BJ (cell line): ENCODE measurements at regions of chr2 and their contacts with region 1.

Region 1: DNA sequence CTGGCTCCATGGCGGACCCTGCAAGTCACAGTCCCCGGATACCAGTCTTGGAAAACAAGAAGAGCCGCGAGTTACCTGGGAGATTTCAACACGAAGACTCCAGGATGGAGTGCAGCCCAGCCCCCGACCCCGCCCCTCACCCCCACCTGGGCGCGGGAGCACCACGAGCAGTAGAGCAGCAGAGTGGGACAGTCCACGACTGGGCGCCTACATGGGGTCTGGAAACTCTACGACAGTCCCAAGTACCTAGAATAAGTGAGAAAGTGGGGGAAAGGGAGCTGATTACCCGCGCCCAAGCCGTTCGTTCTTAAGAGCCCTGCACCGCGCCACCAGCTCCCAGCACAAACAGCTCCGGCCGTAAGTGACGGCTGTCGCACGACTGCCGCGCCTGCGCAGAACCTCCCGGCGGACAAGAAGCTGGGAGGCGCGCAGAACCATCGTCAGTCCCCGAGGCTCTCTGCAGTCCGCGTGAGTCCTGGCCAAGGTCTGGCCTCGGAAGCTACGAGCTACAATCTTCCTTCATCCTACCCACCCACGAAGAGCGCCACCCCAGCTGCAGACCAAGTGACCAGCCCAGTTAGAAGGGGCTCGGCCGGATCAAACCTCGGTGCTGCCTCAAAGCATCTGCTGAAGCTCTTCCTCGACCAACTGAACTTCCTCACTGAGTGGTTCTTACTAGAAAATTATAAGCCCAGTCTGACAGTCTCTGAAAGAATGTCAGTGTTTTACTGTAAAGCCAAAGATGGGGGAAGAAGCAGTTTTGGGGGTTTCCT is at the start of gene DPY30:
- DNase-seq: peak; percentile 70
- H3K4me3 ChIP-seq: peak within 1 kb of the TSS; percentile 66
- H3K27me3 ChIP-seq: no peaks in the 10 kb centered on the region
- CTCF ChIP-seq: no peak
- polyA plus RNA-seq, gene DPY30: 35.3 and 66.1 TPM in 2 replicates

Region 2: GRCh38 chr2:31859959-31860358 is 179.7 kb before region 1 on chr2:
- CTCF ChIA-PET with region 1: no interaction called
- POLR2A ChIA-PET with region 1: no interaction called
- DNase-seq: no peak
- H3K4me3 ChIP-seq: no peak overlapping the region
- H3K27me3 ChIP-seq: no peaks in the 10 kb centered on the region
- CTCF ChIP-seq: no peak

Region 3: GRCh38 chr2:31983762-31984460 is 55.7 kb before region 1 on chr2:
- CTCF ChIA-PET with region 1: no interaction called
- POLR2A ChIA-PET with region 1: interaction called, 11 read pairs
- DNase-seq: no peak
- H3K4me3 ChIP-seq: no peak overlapping the region
- H3K27me3 ChIP-seq: no peaks in the 10 kb centered on the region
- CTCF ChIP-seq: no peak

Region 4: GRCh38 chr2:32063310-32064161 is 23.9 kb after region 1 on chr2 and contains the start of gene SPAST:
- CTCF ChIA-PET with region 1: interaction called, 3 read pairs
- POLR2A ChIA-PET with region 1: interaction called, 18 read pairs
- DNase-seq: peak; percentile 87
- H3K4me3 ChIP-seq: peak within 1 kb of the TSS; percentile 82
- H3K27me3 ChIP-seq: no peaks in the 10 kb centered on the region
- CTCF ChIP-seq: peak; percentile 62
- polyA plus RNA-seq, gene SPAST: 4.5 and 10.3 TPM in 2 replicates